MCF 10A (cell line): ENCODE measurements at regions of chr9 and their contacts with region 1.

Region 1: GRCh38 chr9:120348951-120349429 is 231.0 kb downstream of the CDK5RAP2 start:
- DNase-seq: peak; percentile 64
- H3K4me3 Mint-ChIP-seq: no peak overlapping the region
- H3K27ac Mint-ChIP-seq: no peak overlapping the region
- H3K4me1 Mint-ChIP-seq: peaks cover 5% of the 10 kb centered on the region
- H3K27me3 Mint-ChIP-seq: no peaks in the 10 kb centered on the region
- CTCF ChIP-seq: peak; percentile 87

Region 2: GRCh38 chr9:118522093-118523028 is 1826.6 kb before region 1 on chr9:
- CTCF ChIA-PET with region 1: interaction called, 4 read pairs
- POLR2A ChIA-PET with region 1: no interaction called
- intact Hi-C with region 1: loop called (anchors 1 kb)
- DNase-seq: peak; percentile 73
- H3K4me3 Mint-ChIP-seq: no peak overlapping the region
- H3K27ac Mint-ChIP-seq: no peak overlapping the region
- H3K4me1 Mint-ChIP-seq: no peaks in the 10 kb centered on the region
- H3K27me3 Mint-ChIP-seq: no peaks in the 10 kb centered on the region
- CTCF ChIP-seq: peak; percentile 77

Region 3: DNA sequence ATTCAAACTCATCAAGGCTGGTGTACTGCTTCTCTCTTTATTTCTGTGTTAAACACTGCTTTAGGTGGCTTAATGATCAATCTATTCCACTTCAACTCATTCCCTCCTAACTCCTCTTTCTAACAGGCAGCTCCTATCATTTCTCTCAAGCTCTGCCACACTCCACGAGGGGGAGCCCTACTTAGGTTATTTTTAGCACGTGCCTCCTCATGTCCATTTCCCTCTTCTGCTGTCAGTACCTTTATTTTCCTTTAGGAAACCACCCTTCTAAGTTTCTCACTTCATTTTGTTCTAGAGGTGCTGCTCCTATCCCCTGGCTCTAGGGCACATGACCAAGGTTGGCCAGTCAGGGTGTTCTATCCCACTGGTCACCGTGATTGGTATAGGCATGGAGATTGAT is 973.1 kb before region 1 on chr9:
- CTCF ChIA-PET with region 1: interaction called, 8 read pairs
- POLR2A ChIA-PET with region 1: no interaction called
- intact Hi-C with region 1: loop called (anchors 5 kb)
- DNase-seq: peak; percentile 62
- H3K4me3 Mint-ChIP-seq: no peak overlapping the region
- H3K27ac Mint-ChIP-seq: no peak overlapping the region
- H3K4me1 Mint-ChIP-seq: no peaks in the 10 kb centered on the region
- H3K27me3 Mint-ChIP-seq: no peaks in the 10 kb centered on the region
- CTCF ChIP-seq: peak; percentile 36

Region 4: DNA sequence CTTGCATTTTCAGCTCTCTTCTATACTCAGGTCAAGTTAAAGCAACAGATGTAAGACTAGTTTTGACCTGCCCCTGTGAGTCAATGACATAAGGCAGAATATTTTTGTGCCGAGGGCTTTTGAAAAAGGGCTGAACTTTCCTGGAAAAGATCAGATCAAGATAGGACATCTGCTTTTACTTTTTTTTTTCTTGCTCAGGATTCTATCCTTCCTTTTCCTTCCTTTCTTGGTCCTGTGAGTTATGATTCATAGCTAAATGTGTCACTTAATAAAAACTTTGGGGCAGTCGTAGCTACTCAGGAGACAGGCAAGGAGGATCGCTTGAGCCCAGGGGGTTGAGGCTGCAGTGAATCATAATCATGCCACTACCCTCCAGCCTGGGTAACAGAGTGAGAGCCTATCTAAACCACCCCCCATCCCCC is 895.5 kb before region 1 on chr9:
- CTCF ChIA-PET with region 1: interaction called, 3 read pairs
- POLR2A ChIA-PET with region 1: no interaction called
- intact Hi-C with region 1: loop called (anchors 5 kb)
- DNase-seq: peak; percentile 66
- H3K4me3 Mint-ChIP-seq: peak overlapping the region; percentile 40
- H3K27ac Mint-ChIP-seq: peak overlapping the region; percentile 75
- H3K4me1 Mint-ChIP-seq: peaks cover 41% of the 10 kb centered on the region
- H3K27me3 Mint-ChIP-seq: no peaks in the 10 kb centered on the region
- CTCF ChIP-seq: no peak